Activated CD4-positive, alpha-beta memory T cell treated with anti-CD3 and anti-CD28 coated beads, Interleukin-2, amount 10 ng/mL, durations not matched to agents 7 days and 5 days (primary cell): ENCODE measurements at regions of chr22 and their contacts with region 1.

Region 1: GRCh38 chr22:46296257-46297150 is at the start of gene GTSE1:
- DNase-seq: peak; percentile 99
- H3K4me3 Mint-ChIP-seq: peak within 1 kb of the TSS; percentile 88
- H3K27ac Mint-ChIP-seq: peak within 1 kb of the TSS; percentile 97
- H3K4me1 Mint-ChIP-seq: peaks cover 63% of the 10 kb centered on the region
- H3K27me3 Mint-ChIP-seq: no peaks in the 10 kb centered on the region
- total RNA-seq, gene GTSE1: 67.6 to 76.2 TPM

Region 2: GRCh38 chr22:46035742-46036557 is 260.6 kb before region 1 on chr22:
- CTCF ChIA-PET with region 1: no interaction called
- POLR2A ChIA-PET with region 1: interaction called, 19 read pairs
- DNase-seq: peak; percentile 100
- H3K4me3 Mint-ChIP-seq: peak overlapping the region; percentile 84
- H3K27ac Mint-ChIP-seq: peak overlapping the region; percentile 90
- H3K4me1 Mint-ChIP-seq: peaks cover 17% of the 10 kb centered on the region
- H3K27me3 Mint-ChIP-seq: no peaks in the 10 kb centered on the region

Region 3: DNA sequence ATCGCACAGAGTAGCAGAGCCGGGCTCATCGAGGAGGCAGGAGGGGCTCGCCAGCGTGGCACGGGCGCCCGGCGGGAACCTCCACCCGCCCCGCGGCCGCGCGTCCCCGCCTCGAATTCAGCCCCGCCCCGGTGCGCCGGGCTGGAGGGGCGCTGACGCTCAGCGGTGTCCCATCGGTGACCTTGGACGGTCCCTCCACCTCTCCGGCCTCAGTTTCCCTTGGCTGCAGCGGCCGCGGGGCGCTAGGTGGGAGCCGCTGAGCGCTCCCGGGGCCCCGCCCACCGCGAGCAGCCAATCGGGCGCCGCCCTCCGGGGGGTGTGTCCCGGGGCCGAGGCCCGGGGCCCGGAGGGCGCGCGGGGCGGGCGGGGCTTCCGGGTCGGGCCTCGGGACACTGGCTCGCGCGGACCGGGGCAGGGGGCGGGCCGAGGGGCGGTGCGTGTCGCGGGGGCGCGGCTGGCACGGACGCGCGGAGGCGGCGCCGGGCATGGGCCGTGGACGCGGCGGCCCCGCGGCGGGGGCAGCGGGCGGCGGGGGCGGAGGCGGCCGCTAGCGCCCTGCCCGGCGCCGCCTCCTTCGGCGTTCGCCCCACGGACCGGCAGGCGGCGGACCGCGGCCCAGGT is 146.4 kb before region 1 on chr22 and contains the start of gene PPARA:
- CTCF ChIA-PET with region 1: interaction called, 5 read pairs
- POLR2A ChIA-PET with region 1: interaction called, 12 read pairs
- DNase-seq: peak; percentile 87
- H3K4me3 Mint-ChIP-seq: peak within 1 kb of the TSS; percentile 73
- H3K27ac Mint-ChIP-seq: peak within 1 kb of the TSS; percentile 16
- H3K4me1 Mint-ChIP-seq: peaks cover 18% of the 10 kb centered on the region
- H3K27me3 Mint-ChIP-seq: peaks cover 40% of the 10 kb centered on the region
- total RNA-seq, gene PPARA: 12.9 to 13.4 TPM

Region 4: GRCh38 chr22:46267431-46268279 is 28.8 kb before region 1 on chr22 and contains the start of gene TTC38:
- CTCF ChIA-PET with region 1: interaction called, 6 read pairs
- POLR2A ChIA-PET with region 1: interaction called, 14 read pairs
- DNase-seq: peak; percentile 66
- H3K4me3 Mint-ChIP-seq: peak within 1 kb of the TSS; percentile 86
- H3K27ac Mint-ChIP-seq: peak within 1 kb of the TSS; percentile 66
- H3K4me1 Mint-ChIP-seq: peaks cover 28% of the 10 kb centered on the region
- H3K27me3 Mint-ChIP-seq: peaks cover 36% of the 10 kb centered on the region
- total RNA-seq, gene TTC38: 17.8 to 20.7 TPM

Region 5: DNA sequence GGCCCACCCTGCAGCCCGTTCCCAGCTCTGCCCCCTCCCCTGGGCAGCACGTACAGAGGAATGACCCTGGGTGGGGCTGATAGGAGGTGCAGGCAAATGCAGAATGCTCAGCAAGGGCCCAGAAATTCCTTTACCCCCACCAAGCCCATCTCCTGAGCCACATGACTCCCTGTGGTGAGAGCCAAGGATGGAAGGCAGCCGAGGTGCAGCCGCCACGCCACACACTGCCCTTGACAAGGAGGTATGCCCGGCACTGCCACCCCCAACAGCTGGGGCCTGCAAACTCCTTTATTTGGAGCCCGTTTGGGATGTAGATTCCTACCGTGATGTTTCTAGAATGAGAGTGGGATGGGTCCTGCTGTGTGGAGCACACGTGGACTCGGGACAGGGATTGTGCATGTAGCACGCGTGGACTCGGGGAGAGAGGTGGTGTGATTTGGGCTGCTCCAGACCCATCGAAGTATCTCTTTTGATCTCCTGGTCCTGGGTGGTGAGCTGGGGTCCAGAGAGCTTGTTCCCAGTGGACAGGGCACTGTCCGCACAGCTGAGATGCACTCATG is 13.1 kb after region 1 on chr22:
- CTCF ChIA-PET with region 1: interaction called, 8 read pairs
- POLR2A ChIA-PET with region 1: interaction called, 29 read pairs
- DNase-seq: no peak
- H3K4me3 Mint-ChIP-seq: no peak overlapping the region
- H3K27ac Mint-ChIP-seq: no peak overlapping the region
- H3K4me1 Mint-ChIP-seq: peaks cover 12% of the 10 kb centered on the region
- H3K27me3 Mint-ChIP-seq: no peaks in the 10 kb centered on the region

Region 6: DNA sequence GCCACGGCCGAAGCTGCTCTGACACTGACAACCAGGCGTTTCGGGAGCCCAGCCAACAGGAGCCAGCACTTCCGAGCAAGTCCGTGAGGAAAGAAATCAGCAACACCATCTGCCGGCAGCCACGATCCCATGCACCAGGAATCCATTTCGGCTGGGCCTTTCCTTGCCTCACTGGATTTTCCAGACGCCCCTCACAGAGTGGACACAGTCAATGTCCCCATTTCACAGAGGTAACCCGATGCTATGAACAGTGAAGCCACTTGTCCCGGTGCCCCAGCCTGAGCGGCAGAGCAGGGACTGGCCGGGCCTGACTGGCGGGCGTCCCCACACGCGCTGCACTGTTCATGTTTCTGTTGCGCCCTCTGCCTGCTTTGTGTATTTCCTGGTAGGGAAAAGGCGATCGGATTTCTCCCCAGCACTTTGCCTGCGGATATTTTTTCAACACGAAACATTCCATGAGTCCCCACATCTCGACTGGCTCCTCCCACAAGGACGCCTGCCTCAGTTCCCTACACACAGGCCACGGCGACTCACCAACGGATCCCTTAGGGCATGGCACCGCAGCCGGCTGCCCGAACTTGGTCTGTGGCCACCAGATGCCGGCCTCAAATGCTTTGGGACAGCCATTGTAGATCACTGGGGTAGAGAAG is 94.3 kb after region 1 on chr22:
- CTCF ChIA-PET with region 1: no interaction called
- POLR2A ChIA-PET with region 1: no interaction called
- DNase-seq: no peak
- H3K4me3 Mint-ChIP-seq: no peak overlapping the region
- H3K27ac Mint-ChIP-seq: no peak overlapping the region
- H3K4me1 Mint-ChIP-seq: no peaks in the 10 kb centered on the region
- H3K27me3 Mint-ChIP-seq: no peaks in the 10 kb centered on the region